ENCODE measurements at regions of chr3 and their contacts with region 1.

Region 1: GRCh38 chr3:101791778-101792177 is 12.8 kb downstream of the NXPE3 start:
- DNase-seq: peak; percentile 26
- CTCF ChIP-seq: no peak

Region 2: GRCh38 chr3:101703169-101703568 is 88.6 kb before region 1 on chr3:
- in situ Hi-C with region 1: loop called (anchors 10 kb)
- DNase-seq: no peak
- CTCF ChIP-seq: no peak

Region 3: DNA sequence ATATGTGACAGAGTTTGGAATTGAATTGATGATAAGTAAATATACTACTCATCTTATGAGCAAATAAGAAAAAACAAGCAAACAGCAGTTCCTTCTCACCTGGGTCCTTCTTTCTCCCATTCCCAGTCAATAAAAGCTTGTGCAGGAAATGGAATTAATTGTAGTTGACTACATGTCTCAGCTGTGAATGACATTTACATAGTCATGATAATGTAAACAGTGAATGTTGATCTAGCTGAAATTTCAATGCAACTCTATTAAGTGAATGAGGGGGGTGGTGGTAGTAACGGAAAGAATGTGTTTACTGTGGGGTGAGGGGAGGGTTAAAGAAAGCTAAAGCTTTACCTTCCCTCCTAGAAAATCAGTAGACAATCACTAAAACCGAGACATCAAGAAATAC is 133.8 kb after region 1 on chr3:
- in situ Hi-C with region 1: no loop called
- DNase-seq: no peak
- CTCF ChIP-seq: no peak